Cardiac septum (tissue), 1 donor: ENCODE measurements at regions of chr18 and their contacts with region 1.

Region 1: DNA sequence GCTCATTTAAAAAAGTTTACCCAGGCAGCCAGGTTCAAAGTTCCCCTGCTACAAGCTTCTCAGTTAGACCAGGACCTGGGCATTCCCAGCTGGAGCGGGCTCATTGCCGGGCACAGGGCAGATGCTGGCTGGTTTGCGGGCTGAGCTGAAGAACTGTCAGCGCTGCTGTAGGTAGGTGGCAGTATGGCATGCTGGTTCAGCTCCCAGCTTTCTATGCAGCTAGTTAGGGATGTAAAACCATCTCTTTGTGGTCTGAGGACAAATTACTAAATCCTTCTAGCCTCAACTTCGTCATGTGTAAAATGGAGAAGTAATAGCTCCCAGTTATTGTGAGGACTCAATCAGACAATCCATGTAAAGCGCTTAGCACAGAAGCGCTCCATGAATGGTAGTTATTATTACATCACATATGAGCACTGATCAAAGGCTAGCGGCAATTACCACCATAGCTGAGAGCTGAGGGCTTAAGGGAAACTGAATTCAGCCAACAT is 2.4 kb upstream of the LDLRAD4 start:
- DNase-seq: peak; percentile 84

Region 2: DNA sequence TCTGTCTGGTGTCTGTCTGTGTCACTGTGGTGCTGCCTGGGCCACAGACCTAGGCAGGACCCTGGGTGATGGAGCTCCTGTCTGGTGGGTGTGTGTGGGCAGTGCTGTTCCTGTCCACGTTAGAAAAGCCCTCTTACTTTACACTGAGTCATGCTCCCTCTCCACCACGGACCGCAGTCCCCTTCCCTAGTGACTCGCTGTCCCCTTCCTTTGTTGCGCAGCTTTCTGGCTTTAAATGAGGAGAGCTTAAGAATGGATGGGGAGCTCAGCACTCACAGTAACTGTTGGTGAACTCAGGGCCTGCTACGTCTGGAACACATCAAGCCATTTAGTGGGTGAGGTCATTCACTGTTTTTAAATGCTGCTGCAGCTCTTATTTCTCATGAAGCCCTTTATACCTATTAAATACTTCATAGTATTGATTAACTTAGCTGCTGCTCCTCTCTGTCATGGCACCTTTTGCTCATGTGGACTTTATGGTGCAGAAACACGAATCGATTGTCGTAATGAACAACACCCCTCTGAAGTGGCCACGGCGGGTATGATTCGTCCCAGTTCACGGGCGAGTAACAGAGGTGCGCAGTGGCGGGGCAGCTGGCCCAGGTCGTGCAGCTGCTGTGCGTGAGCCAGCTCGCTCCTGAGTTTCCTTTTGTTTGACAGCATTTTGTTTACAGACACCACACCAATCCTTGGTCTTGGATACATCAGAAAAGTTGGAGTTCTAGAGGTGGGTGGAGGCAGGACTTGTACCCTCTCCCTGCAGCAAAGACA is 102.8 kb after region 1 on chr18:
- intact Hi-C with region 1: loop called (anchors 5 kb)
- DNase-seq: no peak

Region 3: DNA sequence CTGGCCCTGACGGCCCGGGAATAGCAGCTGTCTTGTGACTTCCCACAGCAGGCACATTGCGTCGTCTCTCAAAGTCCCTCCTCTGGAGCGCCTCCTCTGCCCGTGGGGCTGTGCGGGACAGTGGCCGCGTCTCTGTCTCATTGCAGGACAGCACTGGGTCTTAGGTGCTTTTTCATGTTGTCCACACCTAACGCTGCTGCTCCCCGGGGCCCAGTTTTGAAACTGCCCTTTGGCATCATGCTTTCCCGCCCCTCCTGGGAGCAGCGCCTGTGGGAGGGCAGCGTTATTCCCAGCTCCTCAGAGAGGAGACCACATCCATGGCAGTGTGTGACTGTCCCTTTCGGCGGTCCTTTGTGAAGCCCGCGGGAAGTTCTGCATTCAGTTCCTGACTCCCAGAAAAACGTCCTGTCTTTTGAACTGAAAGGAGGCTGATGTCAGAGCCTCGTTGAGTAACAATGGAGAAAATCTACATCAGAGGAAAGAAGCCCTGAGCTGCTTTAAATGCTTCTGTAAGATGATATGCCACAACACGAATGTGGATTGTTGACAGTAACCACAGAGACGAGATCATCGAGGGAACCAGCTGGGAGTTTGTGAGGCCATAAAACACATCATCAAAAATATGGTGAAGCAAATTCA is 284.2 kb after region 1 on chr18:
- intact Hi-C with region 1: loop called (anchors 2 kb)
- DNase-seq: no peak

Region 4: DNA sequence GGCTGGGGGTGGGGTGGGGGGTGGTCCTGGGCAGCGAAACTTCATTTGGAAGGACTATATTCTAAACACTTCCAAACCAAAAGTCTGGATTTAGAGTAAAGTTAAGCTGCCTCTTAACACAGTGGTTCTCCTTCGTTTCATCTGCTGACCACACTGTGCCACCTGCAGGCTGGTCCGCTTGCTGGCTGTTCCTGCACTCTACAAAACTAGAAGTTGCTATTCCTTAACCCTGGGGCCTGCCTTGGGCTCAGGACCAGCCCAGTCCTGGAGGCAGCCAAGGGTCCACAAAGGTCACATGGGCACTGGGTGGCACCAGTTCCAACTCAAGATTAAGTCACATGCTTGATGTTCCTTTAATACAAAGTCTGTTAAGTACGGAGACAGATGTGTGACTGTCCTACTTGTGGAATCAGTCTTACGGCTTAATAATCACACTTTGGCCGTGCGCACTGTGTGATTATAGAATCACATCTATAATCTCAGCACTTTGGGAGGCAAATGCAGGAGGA is 314.8 kb after region 1 on chr18:
- intact Hi-C with region 1: loop called (anchors 5 kb)
- DNase-seq: no peak

Region 5: DNA sequence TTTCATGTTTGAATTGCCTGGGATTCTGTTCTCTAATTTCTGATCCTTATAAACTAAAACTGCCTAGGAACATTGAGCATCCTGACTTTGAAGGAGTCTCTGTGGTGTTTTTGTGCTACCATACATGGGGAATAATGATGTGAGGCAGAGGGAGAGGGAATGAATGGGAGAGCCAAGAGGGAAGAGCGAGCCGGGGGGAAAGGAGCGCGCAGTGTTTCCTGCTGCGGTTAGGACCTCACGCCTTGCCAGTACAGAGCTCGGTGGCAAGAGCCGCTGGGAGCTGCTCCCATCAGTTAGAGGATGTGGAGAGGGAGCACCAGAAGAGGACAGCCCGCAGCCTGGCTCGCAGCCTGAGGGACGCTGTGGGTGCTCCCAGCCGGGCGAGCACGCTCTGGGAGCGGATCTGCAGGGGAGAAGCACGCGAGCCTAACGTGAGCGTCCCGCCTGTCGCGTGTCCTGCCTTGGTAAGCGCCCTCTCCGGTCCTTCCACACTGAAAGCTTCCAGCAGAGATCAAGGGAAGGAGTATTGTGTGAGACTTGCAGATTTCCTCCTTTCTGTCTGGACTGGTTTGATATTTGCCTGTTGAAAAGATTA is 395.6 kb after region 1 on chr18:
- intact Hi-C with region 1: loop called (anchors 1 kb)
- DNase-seq: peak; percentile 86

Region 6: DNA sequence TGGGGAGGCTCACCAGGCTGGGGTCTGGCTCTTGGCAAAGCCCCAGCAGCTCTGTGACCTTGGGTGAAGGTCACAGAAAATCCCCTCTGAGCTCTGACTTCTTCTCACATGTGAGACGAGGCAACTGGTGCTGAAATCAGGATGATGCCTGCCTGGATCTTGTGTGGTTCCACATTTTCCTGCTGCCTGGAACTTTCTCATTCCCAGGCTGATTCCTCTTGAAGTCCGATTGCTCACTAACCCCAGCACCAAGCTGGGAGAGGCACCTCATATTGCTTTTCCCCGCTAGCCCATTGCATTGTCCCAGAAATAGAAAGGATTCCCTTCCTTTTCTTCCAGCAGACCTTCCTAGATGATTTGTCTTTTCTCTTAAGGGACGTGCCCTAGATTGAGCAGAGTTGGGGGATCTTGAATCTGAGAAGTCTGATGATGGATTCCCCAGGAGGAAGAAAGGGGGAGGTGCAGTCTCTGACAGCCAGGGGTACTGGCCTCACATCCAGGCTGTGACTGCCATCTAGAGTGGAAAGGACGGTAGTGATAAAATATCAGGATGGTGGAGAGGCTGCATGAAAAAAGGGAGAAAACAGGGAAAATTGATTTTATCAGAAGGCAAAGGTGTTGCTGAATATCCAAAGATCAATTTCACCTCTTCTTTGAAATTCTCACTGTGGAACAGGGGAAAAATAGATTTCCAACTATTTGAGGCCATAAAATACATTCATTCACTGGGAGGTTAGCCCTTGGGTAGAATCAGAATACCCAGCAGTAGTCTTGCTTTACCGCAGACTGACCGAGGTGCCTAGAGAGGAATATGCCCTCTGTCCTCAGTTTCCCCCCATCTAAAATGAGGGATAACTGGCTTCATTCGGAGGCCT is 413.9 kb after region 1 on chr18:
- intact Hi-C with region 1: loop called (anchors 2 kb)
- DNase-seq: no peak

Region 7: GRCh38 chr18:13726232-13726971 is 510.3 kb after region 1 on chr18 and contains the starts of genes FAM210A and RNMT:
- intact Hi-C with region 1: loop called (anchors 5 kb)
- DNase-seq: peak; percentile 98
- total RNA-seq, gene FAM210A: 48.4 TPM
- total RNA-seq, gene RNMT: 27.0 TPM